CD4-positive, alpha-beta memory T cell (primary cell): ENCODE measurements at regions of chr6 and their contacts with region 1.

Region 1: GRCh38 chr6:161079566-161080262 is 88.1 kb downstream of the MAP3K4 start:
- DNase-seq: peak; percentile 53 to 86 (median 61)
- H3K4me3 ChIP-seq: no peak overlapping the region
- H3K4me3 Mint-ChIP-seq: peak overlapping the region in 2 of 8 donors; percentile 47 to 74
- H3K27ac ChIP-seq: peak overlapping the region; percentile 90
- H3K27ac Mint-ChIP-seq: no peak overlapping the region
- H3K4me1 ChIP-seq: peaks cover 79% of the 10 kb centered on the region
- H3K4me1 Mint-ChIP-seq: peaks cover 0 to 14% (median 8%) of the 10 kb centered on the region in 4 donors
- H3K27me3 ChIP-seq: no peaks in the 10 kb centered on the region
- H3K27me3 Mint-ChIP-seq: no peaks in the 10 kb centered on the region

Region 2: DNA sequence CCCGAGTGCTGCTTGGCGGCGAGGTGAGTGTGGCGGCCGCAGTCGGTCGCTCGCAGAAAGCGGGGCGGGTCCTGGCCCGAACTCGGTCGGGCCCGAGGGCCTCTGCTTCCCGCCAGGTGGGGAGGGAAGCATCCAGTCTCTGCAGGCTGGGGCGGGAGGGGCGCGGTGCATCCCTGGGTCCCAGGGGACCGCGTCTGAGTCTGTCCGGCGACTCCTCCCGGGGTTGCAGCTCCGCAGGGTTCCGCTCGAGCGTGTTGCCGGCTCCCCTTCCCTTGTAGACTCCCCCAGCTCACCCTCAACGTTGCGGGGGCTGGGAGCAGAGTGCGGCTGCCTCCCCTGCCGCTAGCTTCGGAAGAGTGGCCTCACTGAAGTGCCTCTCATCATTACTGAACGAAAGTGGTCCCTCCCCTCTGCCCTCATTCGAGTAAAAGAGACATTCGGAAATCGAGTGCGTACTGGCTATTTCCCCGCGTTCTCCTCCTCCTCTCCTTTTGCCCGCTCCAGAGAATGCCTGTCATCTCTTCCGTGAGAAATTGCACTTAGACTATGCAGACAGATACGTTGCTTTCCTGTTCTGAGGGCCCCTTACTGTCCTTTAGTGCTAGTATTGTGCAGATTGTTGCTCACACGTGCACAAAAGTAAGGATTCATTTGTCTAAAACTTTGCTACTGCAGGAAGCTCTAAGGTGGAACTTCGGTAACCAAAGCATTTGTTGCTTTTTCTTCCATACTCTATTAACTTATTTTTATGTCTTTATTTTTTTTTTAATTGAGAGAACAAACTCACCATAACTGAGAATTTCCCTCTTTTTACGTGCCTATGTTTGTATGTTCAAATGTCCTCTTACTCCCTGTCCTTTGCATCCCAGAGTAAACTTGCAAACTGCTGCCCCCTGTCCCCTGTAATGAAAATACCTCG is 87.4 kb before region 1 on chr6:
- CTCF ChIA-PET with region 1: interaction called, 4 read pairs
- POLR2A ChIA-PET with region 1: interaction called, 35 read pairs
- intact Hi-C with region 1: loop called (anchors 2 kb)
- DNase-seq: peak; percentile 32 to 77 (median 63)
- H3K4me3 ChIP-seq: peak overlapping the region; percentile 85 to 89
- H3K4me3 Mint-ChIP-seq: peak overlapping the region; percentile 91 to 100 (median 97)
- H3K27ac ChIP-seq: peak overlapping the region; percentile 73
- H3K27ac Mint-ChIP-seq: peak overlapping the region; percentile 96 to 99 (median 98)
- H3K4me1 ChIP-seq: peaks cover 45% of the 10 kb centered on the region
- H3K4me1 Mint-ChIP-seq: peaks cover 32 to 52% (median 42%) of the 10 kb centered on the region in 4 donors
- H3K27me3 ChIP-seq: no peaks in the 10 kb centered on the region
- H3K27me3 Mint-ChIP-seq: no peaks in the 10 kb centered on the region

Region 3: GRCh38 chr6:161031721-161032495 is 47.8 kb before region 1 on chr6:
- CTCF ChIA-PET with region 1: interaction called, 3 read pairs
- POLR2A ChIA-PET with region 1: interaction called, 9 read pairs
- intact Hi-C with region 1: loop called (anchors 5 kb)
- DNase-seq: no peak
- H3K4me3 ChIP-seq: no peak overlapping the region
- H3K4me3 Mint-ChIP-seq: peak overlapping the region in 3 of 8 donors; percentile 12 to 46 (median 32)
- H3K27ac ChIP-seq: peak overlapping the region; percentile 0
- H3K27ac Mint-ChIP-seq: peak overlapping the region; percentile 37 to 91 (median 64)
- H3K4me1 ChIP-seq: peaks cover 46% of the 10 kb centered on the region
- H3K4me1 Mint-ChIP-seq: peaks cover 29 to 62% (median 52%) of the 10 kb centered on the region in 4 donors
- H3K27me3 ChIP-seq: no peaks in the 10 kb centered on the region
- H3K27me3 Mint-ChIP-seq: no peaks in the 10 kb centered on the region

Region 4: GRCh38 chr6:161048641-161049040 is 31.1 kb before region 1 on chr6:
- CTCF ChIA-PET with region 1: interaction called, 3 read pairs
- POLR2A ChIA-PET with region 1: interaction called, 13 read pairs
- intact Hi-C with region 1: no loop called
- DNase-seq: no peak
- H3K4me3 ChIP-seq: no peak overlapping the region
- H3K4me3 Mint-ChIP-seq: no peak overlapping the region
- H3K27ac ChIP-seq: no peak overlapping the region
- H3K27ac Mint-ChIP-seq: peak overlapping the region in 1 of 7 donors; percentile 67
- H3K4me1 ChIP-seq: peaks cover 15% of the 10 kb centered on the region
- H3K4me1 Mint-ChIP-seq: peaks cover 21 to 28% (median 23%) of the 10 kb centered on the region in 4 donors
- H3K27me3 ChIP-seq: no peaks in the 10 kb centered on the region
- H3K27me3 Mint-ChIP-seq: no peaks in the 10 kb centered on the region

Region 5: DNA sequence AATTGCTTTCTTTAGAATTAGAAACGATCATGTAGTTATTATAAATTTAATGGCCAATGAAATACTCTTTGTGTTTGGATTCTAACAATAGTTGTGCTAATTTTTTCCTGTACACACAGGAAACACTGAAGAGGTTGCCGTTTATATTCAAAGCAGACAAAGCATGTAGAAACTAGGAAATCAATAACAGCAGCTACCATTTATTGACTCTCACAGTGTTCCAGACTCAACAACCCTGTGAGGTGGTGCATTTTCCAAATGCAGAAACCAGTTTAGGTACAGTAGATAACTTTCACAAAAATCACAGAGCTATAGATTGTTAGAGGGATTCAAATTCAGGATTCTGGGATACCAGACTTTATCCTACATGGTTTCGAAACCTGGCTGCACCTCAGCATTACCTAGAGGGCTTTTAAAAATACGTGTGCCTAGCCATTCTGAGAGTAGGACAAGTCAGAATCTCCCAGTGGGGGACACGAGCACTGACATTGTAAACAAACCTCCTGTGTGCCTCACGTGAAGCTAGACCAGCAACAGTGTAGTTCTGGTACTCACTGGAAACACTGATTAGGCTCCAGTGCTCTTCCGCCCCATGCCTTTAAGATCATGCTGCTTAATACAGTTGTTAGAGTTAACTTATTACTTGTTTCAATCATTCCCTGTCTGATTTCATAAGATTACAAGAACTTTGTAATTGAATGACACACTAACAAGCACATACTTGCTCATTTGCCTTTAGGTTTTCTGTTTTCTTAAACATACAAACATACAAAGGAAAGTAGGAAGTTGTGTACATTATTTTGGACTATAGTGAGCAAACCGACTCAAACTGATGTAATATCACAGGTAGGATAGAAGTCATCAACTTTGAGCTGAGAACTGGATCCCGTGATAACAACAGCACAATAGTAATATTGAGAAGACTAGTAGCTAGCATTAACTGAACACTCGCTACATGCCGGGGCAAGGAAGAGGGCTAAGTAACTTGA is 22.3 kb before region 1 on chr6:
- CTCF ChIA-PET with region 1: no interaction called
- POLR2A ChIA-PET with region 1: interaction called, 10 read pairs
- intact Hi-C with region 1: no loop called
- DNase-seq: no peak
- H3K4me3 ChIP-seq: no peak overlapping the region
- H3K4me3 Mint-ChIP-seq: peak overlapping the region in 5 of 8 donors; percentile 9 to 36 (median 14)
- H3K27ac ChIP-seq: no peak overlapping the region
- H3K27ac Mint-ChIP-seq: peak overlapping the region; percentile 19 to 86 (median 70)
- H3K4me1 ChIP-seq: peaks cover 4% of the 10 kb centered on the region
- H3K4me1 Mint-ChIP-seq: peaks cover 20 to 32% (median 29%) of the 10 kb centered on the region in 4 donors
- H3K27me3 ChIP-seq: no peaks in the 10 kb centered on the region
- H3K27me3 Mint-ChIP-seq: no peaks in the 10 kb centered on the region

Region 6: GRCh38 chr6:161111261-161111660 is 31.5 kb after region 1 on chr6:
- CTCF ChIA-PET with region 1: interaction called, 5 read pairs
- POLR2A ChIA-PET with region 1: interaction called, 15 read pairs
- intact Hi-C with region 1: loop called (anchors 1 kb)
- DNase-seq: peak in 4 of 5 donors; percentile 33 to 51 (median 46)
- H3K4me3 ChIP-seq: no peak overlapping the region
- H3K4me3 Mint-ChIP-seq: peak overlapping the region in 7 of 8 donors; percentile 46 to 73 (median 63)
- H3K27ac ChIP-seq: peak overlapping the region; percentile 31
- H3K27ac Mint-ChIP-seq: peak overlapping the region; percentile 75 to 93 (median 82)
- H3K4me1 ChIP-seq: peaks cover 14% of the 10 kb centered on the region
- H3K4me1 Mint-ChIP-seq: peaks cover 17 to 20% (median 17%) of the 10 kb centered on the region in 4 donors
- H3K27me3 ChIP-seq: no peaks in the 10 kb centered on the region
- H3K27me3 Mint-ChIP-seq: no peaks in the 10 kb centered on the region

Region 7: DNA sequence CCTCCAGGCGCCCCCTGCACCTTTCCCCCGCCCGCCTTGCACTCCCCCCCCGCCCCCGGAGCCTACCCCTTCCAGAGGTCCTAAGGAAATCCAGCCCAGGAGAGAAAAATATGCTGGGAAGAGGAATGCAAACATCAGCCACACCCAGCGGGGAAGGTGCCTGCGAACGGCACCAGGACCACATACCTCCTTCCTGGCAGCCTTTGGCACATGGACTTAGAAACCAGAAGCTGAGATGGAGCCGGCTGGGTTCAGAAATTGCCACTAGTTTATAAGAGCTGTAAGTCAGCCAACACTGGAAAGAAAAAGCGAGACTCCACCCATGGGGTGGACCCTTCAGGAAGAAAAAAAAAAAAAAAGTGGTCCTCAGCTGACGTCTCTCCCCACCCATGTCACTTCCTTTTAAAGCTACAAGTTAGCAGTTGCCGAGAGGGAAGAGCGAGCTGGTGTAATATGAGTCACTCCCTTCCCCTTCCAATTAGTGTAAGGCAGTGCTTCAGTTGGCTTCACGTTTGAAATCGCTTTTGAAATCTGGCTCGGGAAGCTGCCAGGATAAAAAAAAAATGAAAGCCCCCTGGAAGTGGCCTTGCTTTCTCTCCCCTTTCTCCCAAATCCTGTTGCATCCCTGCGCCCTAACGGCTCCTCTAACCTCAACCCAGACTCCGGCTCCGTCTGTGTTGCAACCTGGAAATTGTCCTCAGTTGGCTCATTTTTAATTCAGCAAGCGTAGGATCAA is 194.2 kb after region 1 on chr6 and contains the start of gene AGPAT4:
- CTCF ChIA-PET with region 1: no interaction called
- POLR2A ChIA-PET with region 1: interaction called, 6 read pairs
- intact Hi-C with region 1: loop called (anchors 1 kb)
- DNase-seq: peak; percentile 82 to 90 (median 87)
- H3K4me3 ChIP-seq: peak within 1 kb of the TSS; percentile 46 to 64
- H3K4me3 Mint-ChIP-seq: peak within 1 kb of the TSS; percentile 91 to 97 (median 94)
- H3K27ac ChIP-seq: peak within 1 kb of the TSS; percentile 63
- H3K27ac Mint-ChIP-seq: peak within 1 kb of the TSS; percentile 95 to 99 (median 98)
- H3K4me1 ChIP-seq: peaks cover 24% of the 10 kb centered on the region
- H3K4me1 Mint-ChIP-seq: peaks cover 16 to 33% (median 27%) of the 10 kb centered on the region in 4 donors
- H3K27me3 ChIP-seq: no peaks in the 10 kb centered on the region
- H3K27me3 Mint-ChIP-seq: peaks cover 0 to 3% of the 10 kb centered on the region in 2 donors
- total RNA-seq, gene AGPAT4: 3.6 to 4.3 TPM